ENCODE measurements at regions of chr20 and their contacts with region 1.

Region 1: DNA sequence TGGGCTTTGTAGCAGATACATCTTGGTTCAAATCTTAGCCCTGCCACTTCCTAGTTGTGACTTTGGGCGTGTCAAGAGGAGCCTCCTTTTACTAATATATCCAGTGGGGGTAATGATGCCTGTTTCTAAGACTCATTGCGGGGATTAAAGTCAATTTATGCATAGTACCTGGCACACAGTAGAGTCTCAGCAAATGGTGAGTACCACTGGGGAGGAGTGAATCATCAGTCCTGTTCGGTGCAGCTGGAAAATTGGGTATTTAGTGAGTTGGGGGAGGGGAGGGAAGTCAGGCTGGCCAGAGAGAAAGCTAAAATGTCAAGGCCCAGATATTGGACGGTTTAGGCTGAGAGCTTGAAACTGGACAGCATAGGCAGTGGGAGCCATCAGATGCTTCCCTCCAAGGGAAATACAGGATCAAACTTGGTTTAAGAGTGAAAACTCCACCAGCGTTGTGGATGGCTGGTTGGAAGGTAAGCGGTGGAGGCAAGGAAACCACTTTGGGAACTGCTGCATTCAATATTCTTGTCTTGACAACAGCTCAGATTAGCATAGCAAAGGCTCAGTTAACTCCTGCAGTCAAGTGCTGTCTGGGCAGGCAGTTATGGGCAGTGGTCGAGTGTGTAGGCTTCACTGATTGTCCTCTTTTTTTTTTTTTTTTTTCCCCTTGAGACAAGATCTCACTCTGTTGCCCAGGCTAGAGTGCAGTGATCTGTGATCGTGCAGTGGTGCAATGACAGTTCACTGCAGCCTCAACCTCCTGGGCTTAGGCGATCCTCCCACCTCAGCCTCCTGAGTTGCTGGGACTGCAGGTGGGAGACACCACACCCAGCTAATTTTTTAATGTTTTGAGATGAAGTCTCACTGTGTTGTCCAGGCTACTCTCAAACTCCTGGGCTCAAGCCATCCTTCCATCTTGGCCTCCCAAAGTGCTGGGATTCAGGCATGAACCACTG is 12.9 kb downstream of the PPP1R16B start:
- DNase-seq: no peak
- H3K4me3 ChIP-seq: no peak overlapping the region
- H3K27ac ChIP-seq: no peak overlapping the region
- H3K4me1 ChIP-seq: no peaks in the 10 kb centered on the region
- H3K27me3 ChIP-seq: no peaks in the 10 kb centered on the region

Region 2: DNA sequence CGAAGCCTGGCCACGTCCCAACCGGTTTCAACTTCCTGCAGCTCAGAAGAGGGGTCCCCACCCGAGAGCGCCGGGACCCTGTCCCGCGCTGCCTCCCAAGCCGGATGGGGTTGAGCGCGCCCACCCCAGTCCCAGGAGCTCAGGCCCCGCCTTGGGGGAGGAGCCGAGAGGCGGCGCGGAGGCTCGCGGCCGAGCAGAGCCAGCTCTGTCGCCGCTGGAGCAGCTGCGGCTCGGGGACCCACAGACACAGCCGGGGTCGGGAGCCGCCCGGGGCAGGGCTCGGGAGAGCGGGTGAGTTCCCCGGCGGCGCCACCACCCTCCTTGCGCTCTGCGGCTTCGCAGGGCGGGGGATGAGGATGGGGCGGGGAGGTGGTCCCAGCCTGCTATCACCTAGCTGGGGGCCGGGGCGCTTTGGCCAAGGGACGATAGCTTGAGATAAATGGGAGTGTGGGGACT is 12.9 kb before region 1 on chr20 and contains the start of gene PPP1R16B:
- CTCF ChIA-PET with region 1: interaction called, 25 read pairs
- POLR2A ChIA-PET with region 1: interaction called, 8 read pairs
- DNase-seq: peak; percentile 80 to 88 (median 88)
- H3K4me3 ChIP-seq: peak within 1 kb of the TSS; percentile 71 to 92 (median 81)
- H3K27ac ChIP-seq: peak within 1 kb of the TSS; percentile 98
- H3K4me1 ChIP-seq: peaks cover 18 to 57% (median 44%) of the 10 kb centered on the region in 4 experiments
- H3K27me3 ChIP-seq: peaks cover 0 to 2% (median 0%) of the 10 kb centered on the region in 5 experiments

Region 3: GRCh38 chr20:38833857-38834164 is 15.4 kb after region 1 on chr20:
- CTCF ChIA-PET with region 1: interaction called, 5 read pairs
- POLR2A ChIA-PET with region 1: interaction called, 13 read pairs
- DNase-seq: no peak
- H3K4me3 ChIP-seq: no peak overlapping the region
- H3K27ac ChIP-seq: no peak overlapping the region
- H3K4me1 ChIP-seq: peaks cover 0 to 4% (median 1%) of the 10 kb centered on the region in 4 experiments
- H3K27me3 ChIP-seq: no peaks in the 10 kb centered on the region

Measured in common myeloid progenitor, CD34-positive (primary cell).